Motor neuron (in vitro differentiated cells): ENCODE measurements at regions of chr11 and their contacts with region 1.

Region 1: GRCh38 chr11:100930185-100930778 is 199.3 kb downstream of the PGR start:
- ATAC-seq: peak in 7 of 8 experiments; percentile 49 to 71 (median 59)
- H3K4me3 ChIP-seq: no peak overlapping the region
- H3K27ac ChIP-seq: no peak overlapping the region
- H3K4me1 ChIP-seq: peaks cover 0 to 8% of the 10 kb centered on the region in 2 donors

Region 2: GRCh38 chr11:100575870-100576705 is 354.2 kb before region 1 on chr11:
- in situ Hi-C with region 1: loop called in 7 of 9 experiments (anchors 10 to 25 kb)
- ATAC-seq: peak; percentile 47 to 87 (median 66)
- H3K4me3 ChIP-seq: no peak overlapping the region
- H3K27ac ChIP-seq: no peak overlapping the region
- H3K4me1 ChIP-seq: no peaks in the 10 kb centered on the region

Region 3: DNA sequence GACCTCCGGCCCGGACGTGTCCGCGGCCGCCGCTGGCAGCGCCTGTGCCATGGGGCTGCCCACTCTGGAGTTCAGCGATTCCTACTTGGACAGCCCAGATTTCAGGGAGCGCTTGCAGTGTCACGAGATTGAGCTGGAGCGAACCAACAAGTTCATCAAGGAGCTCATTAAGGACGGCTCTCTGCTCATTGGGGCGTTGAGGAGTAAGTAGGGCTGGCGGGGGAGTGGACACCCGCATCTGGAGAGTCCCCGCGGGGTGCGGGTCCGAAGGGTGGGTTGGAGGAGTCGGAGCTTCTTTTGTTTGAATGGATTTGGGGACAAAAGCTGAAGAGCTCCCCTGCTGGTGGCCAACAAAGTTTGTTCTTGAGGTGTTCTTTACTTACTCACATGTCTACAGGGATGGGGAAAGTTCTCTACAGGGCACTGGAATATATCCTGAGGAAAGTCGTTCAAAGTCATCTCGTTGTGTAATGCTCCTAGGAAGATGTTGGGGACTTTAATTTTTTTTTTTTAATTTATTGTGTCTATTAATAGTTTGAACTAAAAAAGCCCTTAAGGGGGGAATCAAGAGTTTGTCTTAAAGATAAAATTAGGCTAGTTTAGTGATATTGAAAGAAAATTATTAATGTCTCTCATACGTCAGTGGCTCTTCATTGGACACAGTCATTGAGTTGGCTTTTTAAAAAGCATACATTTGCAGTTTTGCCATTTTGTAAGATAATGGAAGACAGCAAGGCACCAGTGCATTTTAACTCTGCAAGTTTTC is 242.5 kb before region 1 on chr11:
- in situ Hi-C with region 1: loop called in 2 of 9 experiments (anchors 25 kb)
- ATAC-seq: peak; percentile 63 to 75 (median 70)
- H3K4me3 ChIP-seq: peak overlapping the region; percentile 60 to 94 (median 75)
- H3K27ac ChIP-seq: no peak overlapping the region
- H3K4me1 ChIP-seq: peaks cover 4 to 7% of the 10 kb centered on the region in 2 donors

Region 4: GRCh38 chr11:100863080-100863581 is 67.2 kb before region 1 on chr11:
- in situ Hi-C with region 1: loop called in 1 of 9 experiments (anchors 10 kb)
- ATAC-seq: peak in 7 of 8 experiments; percentile 24 to 87 (median 38)
- H3K4me3 ChIP-seq: no peak overlapping the region
- H3K27ac ChIP-seq: no peak overlapping the region
- H3K4me1 ChIP-seq: peaks cover 0 to 4% of the 10 kb centered on the region in 2 donors

Region 5: DNA sequence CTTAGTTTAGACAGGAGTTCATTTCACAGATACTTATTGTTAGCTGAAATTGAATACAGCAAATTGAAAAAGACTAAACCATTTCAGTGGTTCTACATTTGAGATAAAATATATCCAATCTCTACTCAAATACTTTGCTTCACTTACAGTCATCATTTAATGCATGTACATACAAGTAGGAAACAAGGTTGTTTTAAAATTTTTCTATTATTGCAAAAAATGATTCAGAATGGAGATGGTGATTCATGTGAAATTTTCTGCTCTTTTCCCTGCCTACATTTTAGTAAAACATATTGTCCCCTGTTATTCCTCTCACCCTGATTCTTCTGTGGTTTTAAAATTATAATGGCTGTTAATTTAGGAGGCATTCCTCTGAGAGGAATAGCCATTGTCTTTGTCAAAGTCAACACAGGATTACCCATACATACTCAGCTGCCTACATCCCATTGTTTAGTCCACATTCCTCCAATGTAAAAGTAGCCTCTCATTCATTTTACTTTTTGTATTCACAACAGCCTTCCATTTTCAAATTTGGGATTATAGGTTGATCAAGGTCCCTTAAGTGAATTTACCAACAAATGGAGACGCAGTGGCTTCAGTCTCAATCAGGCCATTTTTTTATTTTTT is 593.5 kb after region 1 on chr11:
- in situ Hi-C with region 1: no loop called
- ATAC-seq: no peak
- H3K4me3 ChIP-seq: no peak overlapping the region
- H3K27ac ChIP-seq: no peak overlapping the region
- H3K4me1 ChIP-seq: no peaks in the 10 kb centered on the region